ENCODE measurements at regions of chr19 and their contacts with region 1.

Region 1: GRCh38 chr19:13804830-13805683 is 9.8 kb downstream of the ZSWIM4 start:
- DNase-seq: peak; percentile 79
- ATAC-seq: peak; percentile 98
- H3K4me3 Mint-ChIP-seq: no peak overlapping the region
- H3K27ac Mint-ChIP-seq: peak overlapping the region; percentile 27; the same call in 1 of the 2 replicates
- H3K4me1 Mint-ChIP-seq: peaks cover 6% of the 10 kb centered on the region; the same call in 1 of the 2 replicates
- H3K27me3 Mint-ChIP-seq: no peaks in the 10 kb centered on the region
- CTCF ChIP-seq: peak; percentile 39; the same call in 1 of the 2 replicates

Region 2: DNA sequence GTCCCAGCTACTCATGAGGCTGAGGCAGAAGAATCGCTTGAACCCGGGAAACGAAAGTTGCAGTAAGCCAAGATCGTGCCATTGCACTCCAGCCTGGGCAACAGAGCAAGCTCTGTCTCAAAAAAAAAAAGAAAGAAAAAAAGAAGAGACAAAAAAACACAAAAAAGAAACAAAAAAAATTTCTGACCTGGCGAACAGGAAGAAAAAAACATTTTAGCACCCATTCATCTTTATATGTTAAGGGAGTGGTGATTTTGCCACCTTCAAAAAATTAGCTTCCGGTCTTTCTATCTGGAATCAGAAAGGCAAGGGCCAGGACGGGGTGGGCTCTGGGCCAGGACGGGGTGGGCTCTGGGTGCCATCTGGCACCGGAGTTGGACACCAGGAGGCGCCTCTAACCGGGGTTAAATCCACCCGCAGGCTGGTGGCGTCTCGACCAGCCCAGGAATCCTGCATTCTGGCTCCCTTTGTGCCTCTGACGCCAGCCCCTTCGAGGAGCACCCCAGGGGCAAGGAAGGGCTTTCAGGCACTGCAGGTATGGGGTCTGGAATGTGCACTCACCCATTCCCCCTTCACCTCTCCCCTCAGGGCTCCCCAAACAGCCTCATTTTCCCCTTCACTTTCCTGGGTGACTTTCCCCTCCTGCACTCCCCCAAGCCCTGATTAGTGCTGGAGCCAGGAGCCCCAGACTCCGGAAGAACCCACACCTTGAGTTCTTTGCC is 20.2 kb before region 1 on chr19:
- CTCF ChIA-PET with region 1: interaction called, 10 read pairs
- POLR2A ChIA-PET with region 1: interaction called, 3 read pairs
- DNase-seq: peak; percentile 84
- ATAC-seq: peak; percentile 87
- H3K4me3 Mint-ChIP-seq: peak overlapping the region; percentile 8; the same call in 1 of the 2 replicates
- H3K27ac Mint-ChIP-seq: peak overlapping the region; percentile 64; the same call in 1 of the 2 replicates
- H3K4me1 Mint-ChIP-seq: peaks cover 14% of the 10 kb centered on the region
- H3K27me3 Mint-ChIP-seq: no peaks in the 10 kb centered on the region
- CTCF ChIP-seq: 0 out of 2 replicates have a peak, but pooled peaks have one; percentile 11

Region 3: DNA sequence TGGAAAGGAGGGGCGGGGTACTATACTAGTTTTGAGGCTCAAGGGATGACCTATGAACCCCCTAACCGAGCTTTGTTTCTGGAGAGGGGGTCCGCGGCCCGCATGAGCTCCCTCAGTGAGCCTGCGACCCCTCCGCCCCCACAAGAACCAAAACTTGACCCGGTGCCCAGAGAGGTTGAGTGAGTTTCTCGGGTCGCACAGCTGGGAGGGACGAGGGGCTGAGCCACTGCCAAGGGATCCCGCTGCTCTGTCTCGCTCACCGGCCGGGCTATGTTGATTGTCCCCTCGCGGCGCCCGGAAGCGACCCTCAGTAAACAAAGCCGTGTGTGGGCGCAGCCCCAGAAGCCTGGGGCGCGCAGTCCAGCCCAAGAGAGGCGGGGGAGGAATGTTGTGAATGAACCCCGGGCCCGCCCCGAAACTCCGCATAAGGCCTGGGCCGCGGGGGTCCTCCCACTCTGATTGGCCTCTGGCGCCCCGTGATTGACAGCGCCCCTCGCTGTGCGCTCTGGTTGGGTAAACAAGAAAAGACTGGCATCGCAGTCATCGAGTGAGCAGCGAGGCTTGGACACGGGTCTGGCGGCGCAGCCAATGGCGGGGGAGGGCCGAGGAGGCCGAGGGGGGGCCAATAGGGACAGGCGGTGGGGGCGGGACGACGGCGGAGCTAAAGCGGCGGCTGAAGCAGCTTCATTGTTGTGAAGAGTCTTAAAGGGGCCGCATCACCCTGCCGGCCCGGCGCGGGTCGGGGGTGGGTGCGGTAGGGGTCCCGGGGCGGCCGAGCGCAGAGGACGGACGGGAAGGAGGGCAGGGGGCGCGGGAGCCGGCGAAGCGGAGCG is 10.1 kb before region 1 on chr19 and contains the start of gene ZSWIM4:
- CTCF ChIA-PET with region 1: interaction called, 28 read pairs
- POLR2A ChIA-PET with region 1: interaction called, 11 read pairs
- DNase-seq: peak; percentile 100
- ATAC-seq: peak; percentile 91
- H3K4me3 Mint-ChIP-seq: peak within 1 kb of the TSS; percentile 92
- H3K27ac Mint-ChIP-seq: peak within 1 kb of the TSS; percentile 98
- H3K4me1 Mint-ChIP-seq: peaks cover 16% of the 10 kb centered on the region
- H3K27me3 Mint-ChIP-seq: no peaks in the 10 kb centered on the region
- CTCF ChIP-seq: no peak
- total RNA-seq, gene ZSWIM4: 33.4 to 35.5 TPM (median 34.2 TPM) in 3 replicates

Region 4: GRCh38 chr19:13817615-13818371 is 12.7 kb after region 1 on chr19:
- CTCF ChIA-PET with region 1: interaction called, 40 read pairs
- POLR2A ChIA-PET with region 1: interaction called, 12 read pairs
- DNase-seq: peak; percentile 97
- ATAC-seq: peak; percentile 78
- H3K4me3 Mint-ChIP-seq: peak overlapping the region; percentile 73
- H3K27ac Mint-ChIP-seq: peak overlapping the region; percentile 98
- H3K4me1 Mint-ChIP-seq: 0 out of 2 replicates have a peak, but pooled peaks cover 3% of the 10 kb centered on the region
- H3K27me3 Mint-ChIP-seq: no peaks in the 10 kb centered on the region
- CTCF ChIP-seq: no peak

Region 5: DNA sequence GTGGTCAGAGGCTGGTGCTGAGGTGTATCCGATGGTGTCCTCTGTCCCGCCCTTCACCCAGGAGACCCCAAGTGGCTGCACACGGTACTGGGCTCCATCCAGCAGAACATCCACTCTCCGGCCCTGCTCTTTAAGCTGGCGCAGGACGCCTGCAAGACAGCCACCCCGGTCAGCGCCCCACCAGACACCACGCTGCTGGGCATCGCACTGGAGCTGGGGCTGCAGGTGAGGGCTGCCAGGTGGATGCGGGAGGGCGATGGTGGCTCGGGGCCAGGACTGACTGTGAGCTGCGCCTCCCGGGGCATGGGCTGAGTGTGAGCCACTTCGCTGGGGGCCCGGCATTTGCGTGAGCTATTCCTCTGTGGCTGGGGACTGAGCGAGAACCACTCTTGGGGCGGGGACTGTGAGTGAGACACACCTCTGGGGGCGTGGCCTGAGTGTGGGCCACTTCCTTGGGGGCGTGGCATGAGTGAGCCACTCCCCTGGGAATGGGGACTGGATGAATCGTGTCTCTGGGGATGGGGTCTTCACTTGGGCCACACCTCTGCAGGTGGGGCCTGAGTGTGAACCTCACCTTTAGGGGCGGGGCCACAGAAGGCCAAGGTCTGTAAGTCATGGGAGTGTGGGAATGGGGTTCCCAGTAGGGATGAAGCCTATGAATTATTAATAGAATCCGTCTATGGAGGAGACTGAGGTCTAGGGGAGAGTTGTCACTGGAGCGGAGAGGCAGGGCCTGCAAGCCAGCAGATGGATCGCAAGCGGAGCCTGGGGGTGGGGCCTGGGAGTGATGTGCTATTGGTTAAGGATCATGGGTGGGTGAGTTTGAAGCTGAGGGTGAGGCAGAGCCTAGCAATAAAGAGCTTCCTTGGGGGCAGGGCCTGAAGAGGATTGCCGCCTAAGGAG is 20.7 kb after region 1 on chr19:
- CTCF ChIA-PET with region 1: interaction called, 17 read pairs
- POLR2A ChIA-PET with region 1: no interaction called
- DNase-seq: peak; percentile 94
- ATAC-seq: peak; percentile 86
- H3K4me3 Mint-ChIP-seq: peak overlapping the region; percentile 37; the same call in 1 of the 2 replicates
- H3K27ac Mint-ChIP-seq: peak overlapping the region; percentile 92
- H3K4me1 Mint-ChIP-seq: peaks cover 15% of the 10 kb centered on the region
- H3K27me3 Mint-ChIP-seq: no peaks in the 10 kb centered on the region
- CTCF ChIP-seq: 0 out of 2 replicates have a peak, but pooled peaks have one; percentile 35

Measured in WTC11 (cell line).